ENCODE measurements at regions of chr5 and their contacts with region 1.

Region 1: DNA sequence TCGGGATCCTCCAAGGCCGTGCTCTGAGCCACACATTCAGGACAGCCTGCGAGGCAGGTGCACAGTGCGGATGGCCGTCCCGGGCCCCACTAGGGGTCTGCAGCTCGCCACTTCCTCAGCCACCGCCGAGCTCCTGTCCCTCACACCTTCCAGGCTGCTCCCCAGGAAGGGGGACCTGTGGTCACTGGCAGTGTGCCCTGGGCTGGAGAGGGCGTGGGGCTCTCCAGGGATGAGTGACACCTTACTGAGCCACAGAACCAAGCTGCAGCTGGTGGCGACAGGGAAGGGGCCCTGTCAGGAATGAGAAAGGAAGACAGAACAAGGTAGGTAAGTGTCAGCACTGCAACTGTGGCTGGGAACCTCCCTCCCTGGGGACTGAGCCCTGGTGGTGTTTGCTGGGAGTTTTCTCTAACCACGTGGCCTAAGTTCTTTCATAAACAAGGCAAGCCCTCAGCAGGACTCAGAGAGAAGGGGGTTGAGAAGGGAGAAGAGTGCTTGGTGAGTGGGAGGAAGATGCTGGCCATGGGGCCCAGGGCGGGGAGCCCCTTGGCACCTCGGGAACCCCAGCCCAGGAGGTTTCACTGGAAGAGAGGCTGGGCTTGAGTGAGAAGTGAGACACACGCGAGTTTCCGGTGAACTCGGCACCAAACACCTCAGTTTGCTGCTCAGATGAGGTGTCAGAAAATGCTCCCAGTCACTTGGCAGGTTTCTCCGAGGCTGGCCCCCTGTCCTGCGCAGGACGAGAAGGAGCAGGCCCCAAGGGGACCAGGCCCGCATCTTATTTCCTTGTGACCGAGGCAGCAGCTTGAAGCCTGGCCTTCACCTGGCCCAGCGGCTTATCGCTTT is 5.2 kb downstream of the IL13 start:
- DNase-seq: peak in 1 of 9 donors; percentile 69
- ATAC-seq: peak; percentile 33
- H3K4me3 ChIP-seq: no peak overlapping the region
- H3K4me3 Mint-ChIP-seq: peak overlapping the region in 1 of 10 donors; percentile 60
- H3K27ac ChIP-seq: no peak overlapping the region
- H3K27ac Mint-ChIP-seq: peak overlapping the region in 1 of 9 donors; percentile 91
- H3K4me1 ChIP-seq: peaks cover 0 to 28% of the 10 kb centered on the region in 2 donors
- H3K4me1 Mint-ChIP-seq: peaks cover 0 to 58% (median 0%) of the 10 kb centered on the region in 7 donors
- H3K27me3 ChIP-seq: no peaks in the 10 kb centered on the region
- H3K27me3 Mint-ChIP-seq: peaks cover 0 to 16% (median 9%) of the 10 kb centered on the region in 5 donors

Region 2: GRCh38 chr5:132639706-132640130 is 23.4 kb before region 1 on chr5:
- CTCF ChIA-PET with region 1: no interaction called
- POLR2A ChIA-PET with region 1: no interaction called
- intact Hi-C with region 1: no loop called
- DNase-seq: no peak
- ATAC-seq: no peak
- H3K4me3 ChIP-seq: no peak overlapping the region
- H3K4me3 Mint-ChIP-seq: peak overlapping the region in 1 of 10 donors; percentile 55
- H3K27ac ChIP-seq: no peak overlapping the region
- H3K27ac Mint-ChIP-seq: peak overlapping the region in 2 of 9 donors; percentile 32 to 64
- H3K4me1 ChIP-seq: no peaks in the 10 kb centered on the region
- H3K4me1 Mint-ChIP-seq: peaks cover 0 to 87% (median 0%) of the 10 kb centered on the region in 7 donors
- H3K27me3 ChIP-seq: no peaks in the 10 kb centered on the region
- H3K27me3 Mint-ChIP-seq: no peaks in the 10 kb centered on the region

Region 3: GRCh38 chr5:132651838-132652469 is 11.2 kb before region 1 on chr5:
- CTCF ChIA-PET with region 1: no interaction called
- POLR2A ChIA-PET with region 1: no interaction called
- intact Hi-C with region 1: no loop called
- DNase-seq: no peak
- ATAC-seq: no peak
- H3K4me3 ChIP-seq: no peak overlapping the region
- H3K4me3 Mint-ChIP-seq: no peak overlapping the region
- H3K27ac ChIP-seq: no peak overlapping the region
- H3K27ac Mint-ChIP-seq: no peak overlapping the region
- H3K4me1 ChIP-seq: peaks cover 6 to 12% of the 10 kb centered on the region in 2 donors
- H3K4me1 Mint-ChIP-seq: peaks cover 0 to 16% (median 6%) of the 10 kb centered on the region in 7 donors
- H3K27me3 ChIP-seq: peaks cover 0 to 5% of the 10 kb centered on the region in 2 donors
- H3K27me3 Mint-ChIP-seq: peaks cover 16 to 38% (median 26%) of the 10 kb centered on the region in 5 donors

Region 4: GRCh38 chr5:132704875-132705274 is 41.7 kb after region 1 on chr5:
- CTCF ChIA-PET with region 1: no interaction called
- POLR2A ChIA-PET with region 1: no interaction called
- intact Hi-C with region 1: loop called in 1 of 2 experiments (anchors 5 kb)
- DNase-seq: no peak
- ATAC-seq: no peak
- H3K4me3 ChIP-seq: no peak overlapping the region
- H3K4me3 Mint-ChIP-seq: no peak overlapping the region
- H3K27ac ChIP-seq: no peak overlapping the region
- H3K27ac Mint-ChIP-seq: no peak overlapping the region
- H3K4me1 ChIP-seq: no peaks in the 10 kb centered on the region
- H3K4me1 Mint-ChIP-seq: peaks cover 0 to 28% (median 0%) of the 10 kb centered on the region in 7 donors
- H3K27me3 ChIP-seq: no peaks in the 10 kb centered on the region
- H3K27me3 Mint-ChIP-seq: no peaks in the 10 kb centered on the region